ENCODE measurements at regions of chr9 and their contacts with region 1.

Region 1: GRCh38 chr9:137302176-137302994 is at the start of gene NRARP:
- DNase-seq: peak; percentile 74 to 95 (median 90)
- ATAC-seq: peak; percentile 94
- H3K4me3 ChIP-seq: peak within 1 kb of the TSS; percentile 39 to 50
- H3K4me3 Mint-ChIP-seq: peak within 1 kb of the TSS; percentile 60
- H3K27ac ChIP-seq: no peak within 1 kb of the TSS
- H3K27ac Mint-ChIP-seq: no peak within 1 kb of the TSS
- H3K4me1 ChIP-seq: peaks cover 48% of the 10 kb centered on the region
- H3K4me1 Mint-ChIP-seq: peaks cover 16% of the 10 kb centered on the region
- H3K27me3 ChIP-seq: peaks cover 20 to 21% of the 10 kb centered on the region in 2 experiments
- H3K27me3 Mint-ChIP-seq: peaks cover 14% of the 10 kb centered on the region
- CTCF ChIP-seq: peak; percentile 42
- total RNA-seq, gene NRARP: 1.00 to 1.5 TPM

Region 2: GRCh38 chr9:137269231-137269772 is 33.1 kb before region 1 on chr9:
- CTCF ChIA-PET with region 1: no interaction called
- POLR2A ChIA-PET with region 1: no interaction called
- intact Hi-C with region 1: no loop called
- DNase-seq: no peak
- ATAC-seq: no peak
- H3K4me3 ChIP-seq: no peak overlapping the region
- H3K4me3 Mint-ChIP-seq: no peak overlapping the region
- H3K27ac ChIP-seq: no peak overlapping the region
- H3K27ac Mint-ChIP-seq: no peak overlapping the region
- H3K4me1 ChIP-seq: peaks cover 21% of the 10 kb centered on the region
- H3K4me1 Mint-ChIP-seq: peaks cover 9% of the 10 kb centered on the region
- H3K27me3 ChIP-seq: no peaks in the 10 kb centered on the region
- H3K27me3 Mint-ChIP-seq: no peaks in the 10 kb centered on the region
- CTCF ChIP-seq: no peak

Region 3: DNA sequence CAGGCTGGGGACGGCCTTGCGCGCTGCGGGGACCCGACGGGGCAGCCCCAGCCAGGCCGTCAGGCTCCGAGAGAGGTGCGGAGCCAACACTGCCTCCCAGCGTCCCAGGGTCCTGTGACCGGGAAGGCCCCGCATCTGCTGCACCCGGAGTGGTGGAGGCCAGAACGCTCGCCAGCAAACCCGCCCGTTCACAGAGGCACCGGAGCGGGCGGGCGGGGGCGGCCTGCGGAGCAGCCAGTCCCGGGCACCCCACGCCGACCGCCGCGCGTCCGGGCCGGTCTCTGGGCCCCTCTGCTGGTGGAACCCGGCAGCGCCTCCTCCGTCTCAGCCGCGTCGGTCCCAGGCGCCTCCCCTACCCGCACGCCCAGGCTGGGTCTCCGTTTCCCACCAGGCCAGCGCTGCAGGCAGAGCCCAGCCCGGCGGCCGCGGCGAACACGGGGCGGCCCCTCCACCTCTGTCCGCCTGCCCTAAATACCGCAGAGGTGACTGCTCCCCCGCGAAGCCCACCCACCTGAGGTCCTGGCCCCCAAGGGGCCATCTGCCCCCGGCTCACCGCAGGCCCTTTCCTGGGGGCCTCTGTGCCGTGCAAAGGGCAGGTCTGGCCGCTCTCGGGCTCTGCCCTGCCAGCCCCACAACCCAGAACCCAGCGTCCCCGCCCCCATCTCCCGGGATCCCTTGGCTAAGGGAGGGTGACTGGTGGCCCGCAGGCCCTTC is 104.6 kb after region 1 on chr9:
- CTCF ChIA-PET with region 1: interaction called, 5 read pairs
- POLR2A ChIA-PET with region 1: interaction called, 3 read pairs
- intact Hi-C with region 1: loop called (anchors 2 kb)
- DNase-seq: peak; percentile 40 to 84 (median 60)
- ATAC-seq: peak; percentile 98
- H3K4me3 ChIP-seq: no peak overlapping the region
- H3K4me3 Mint-ChIP-seq: no peak overlapping the region
- H3K27ac ChIP-seq: no peak overlapping the region
- H3K27ac Mint-ChIP-seq: no peak overlapping the region
- H3K4me1 ChIP-seq: peaks cover 25% of the 10 kb centered on the region
- H3K4me1 Mint-ChIP-seq: peaks cover 4% of the 10 kb centered on the region
- H3K27me3 ChIP-seq: peaks cover 0 to 3% of the 10 kb centered on the region in 2 experiments
- H3K27me3 Mint-ChIP-seq: no peaks in the 10 kb centered on the region
- CTCF ChIP-seq: peak; percentile 66

Region 4: DNA sequence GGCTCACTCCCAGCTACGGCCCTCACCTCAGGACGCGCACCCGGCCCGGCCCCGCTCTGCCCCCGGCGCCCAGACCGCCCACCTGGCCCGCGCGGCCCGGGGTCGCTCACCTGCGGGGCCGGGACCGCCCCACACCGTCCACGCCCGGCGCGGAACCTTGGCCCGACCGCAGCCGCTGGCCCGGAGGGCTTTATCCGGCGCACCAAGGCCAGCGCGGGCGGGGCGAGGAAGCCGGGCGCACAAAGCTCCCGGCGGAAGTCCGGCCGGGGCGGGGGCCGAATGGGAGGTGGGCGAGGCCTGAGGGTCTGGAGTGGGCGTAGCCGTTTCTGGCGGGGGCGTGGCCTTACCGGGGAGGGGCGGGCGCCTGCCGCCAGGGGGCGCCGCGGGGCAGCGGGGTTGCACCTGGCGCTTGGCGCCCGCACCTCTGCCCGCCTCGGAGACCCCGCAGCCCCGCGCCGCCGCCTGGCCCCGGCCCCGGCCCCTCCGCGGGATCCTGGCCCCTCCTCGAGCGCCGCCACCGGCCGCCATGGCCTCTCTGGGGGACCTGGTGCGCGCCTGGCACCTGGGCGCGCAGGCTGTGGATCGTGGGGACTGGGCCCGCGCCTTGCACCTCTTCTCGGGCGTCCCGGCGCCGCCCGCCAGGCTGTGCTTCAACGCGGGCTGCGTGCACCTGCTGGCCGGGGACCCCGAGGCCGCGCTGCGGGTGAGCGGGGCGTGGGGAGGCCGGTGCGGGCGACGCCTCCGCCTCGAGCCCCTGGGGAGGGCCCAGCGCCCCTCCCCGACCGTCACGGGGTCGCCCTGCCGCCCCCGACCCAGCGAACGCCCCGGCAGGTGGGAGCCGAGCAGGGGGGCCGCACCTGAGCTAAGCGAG is 120.9 kb after region 1 on chr9 and contains the starts of genes EXD3 and NOXA1:
- CTCF ChIA-PET with region 1: interaction called, 3 read pairs
- POLR2A ChIA-PET with region 1: interaction called, 4 read pairs
- intact Hi-C with region 1: loop called in 1 of 2 experiments (anchors 5 kb)
- DNase-seq: peak; percentile 91 to 98 (median 94)
- ATAC-seq: peak; percentile 93
- H3K4me3 ChIP-seq: peak within 1 kb of the TSS; percentile 60 to 72
- H3K4me3 Mint-ChIP-seq: peak within 1 kb of the TSS; percentile 83
- H3K27ac ChIP-seq: peak within 1 kb of the TSS in 1 of 2 experiments; percentile 50
- H3K27ac Mint-ChIP-seq: no peak within 1 kb of the TSS
- H3K4me1 ChIP-seq: peaks cover 17% of the 10 kb centered on the region
- H3K4me1 Mint-ChIP-seq: peaks cover 20% of the 10 kb centered on the region
- H3K27me3 ChIP-seq: no peaks in the 10 kb centered on the region
- H3K27me3 Mint-ChIP-seq: no peaks in the 10 kb centered on the region
- CTCF ChIP-seq: peak; percentile 46
- total RNA-seq, gene EXD3: 9.1 to 11.0 TPM
- total RNA-seq, gene NOXA1: 2.4 to 2.7 TPM

Region 5: DNA sequence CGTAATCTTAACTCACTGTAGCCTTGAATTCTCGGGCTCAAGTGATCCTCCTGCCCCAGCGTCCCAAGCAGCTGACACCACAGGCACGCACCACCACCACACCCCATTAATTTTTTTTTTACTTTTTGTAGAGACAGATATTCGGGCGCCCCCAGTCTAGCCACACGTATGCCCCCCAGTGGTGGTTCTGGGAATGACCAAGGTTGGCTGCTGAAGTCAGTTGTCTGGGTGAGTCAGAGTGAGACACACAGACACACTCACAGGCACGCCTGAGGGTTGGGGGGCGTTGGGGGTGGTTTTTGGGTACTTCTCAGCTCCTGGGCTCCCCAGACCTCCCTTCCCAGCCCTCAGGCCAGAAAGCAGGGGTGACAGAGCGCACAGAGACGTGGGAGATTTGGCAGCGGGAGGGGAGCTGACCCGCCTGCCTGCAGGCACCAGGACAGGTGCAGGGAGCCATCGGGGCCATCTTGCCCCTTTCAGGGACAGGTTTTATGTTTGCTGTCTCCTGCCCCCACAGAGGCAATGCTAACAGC is 143.0 kb after region 1 on chr9:
- CTCF ChIA-PET with region 1: no interaction called
- POLR2A ChIA-PET with region 1: no interaction called
- intact Hi-C with region 1: loop called in 1 of 2 experiments (anchors 2 kb)
- DNase-seq: peak; percentile 70 to 90 (median 86)
- ATAC-seq: peak; percentile 85
- H3K4me3 ChIP-seq: no peak overlapping the region
- H3K4me3 Mint-ChIP-seq: no peak overlapping the region
- H3K27ac ChIP-seq: no peak overlapping the region
- H3K27ac Mint-ChIP-seq: no peak overlapping the region
- H3K4me1 ChIP-seq: peaks cover 17% of the 10 kb centered on the region
- H3K4me1 Mint-ChIP-seq: peaks cover 22% of the 10 kb centered on the region
- H3K27me3 ChIP-seq: peaks cover 6 to 13% of the 10 kb centered on the region in 2 experiments
- H3K27me3 Mint-ChIP-seq: peaks cover 16% of the 10 kb centered on the region
- CTCF ChIP-seq: peak; percentile 69

Region 6: DNA sequence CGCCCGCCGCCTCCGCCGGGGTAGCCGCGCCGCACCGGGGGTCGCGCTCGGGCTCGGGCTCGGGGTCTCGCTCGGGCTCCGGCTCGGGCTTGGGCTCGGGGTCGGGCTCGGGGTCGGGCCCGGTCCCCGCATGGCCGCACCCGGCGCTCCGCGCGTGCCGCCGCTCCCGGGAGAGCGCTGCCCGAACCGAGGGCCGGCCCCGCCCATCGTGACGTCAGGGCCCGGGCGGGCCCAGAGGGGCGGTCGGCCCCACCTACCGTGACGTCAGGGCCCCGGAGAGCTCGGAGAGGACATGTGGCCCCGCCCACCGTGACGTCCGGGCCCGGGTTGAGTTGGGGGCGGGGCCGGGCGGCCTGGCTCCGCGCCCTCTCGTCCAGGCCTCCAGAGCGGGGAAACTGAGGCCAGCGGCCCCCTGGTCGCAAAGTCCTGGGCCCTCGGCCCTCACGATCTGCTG is 156.8 kb after region 1 on chr9 and contains the start of gene NSMF:
- CTCF ChIA-PET with region 1: no interaction called
- POLR2A ChIA-PET with region 1: no interaction called
- intact Hi-C with region 1: loop called in 1 of 2 experiments (anchors 5 kb)
- DNase-seq: peak in 8 of 9 experiments; percentile 87 to 97 (median 92)
- ATAC-seq: peak; percentile 71
- H3K4me3 ChIP-seq: peak within 1 kb of the TSS; percentile 49 to 54
- H3K4me3 Mint-ChIP-seq: peak within 1 kb of the TSS; percentile 69
- H3K27ac ChIP-seq: peak within 1 kb of the TSS; percentile 71 to 80
- H3K27ac Mint-ChIP-seq: peak within 1 kb of the TSS; percentile 79
- H3K4me1 ChIP-seq: peaks cover 72% of the 10 kb centered on the region
- H3K4me1 Mint-ChIP-seq: peaks cover 44% of the 10 kb centered on the region
- H3K27me3 ChIP-seq: no peaks in the 10 kb centered on the region
- H3K27me3 Mint-ChIP-seq: no peaks in the 10 kb centered on the region
- CTCF ChIP-seq: no peak
- total RNA-seq, gene NSMF: 82.8 to 87.2 TPM

Region 7: GRCh38 chr9:137521405-137521985 is 219.1 kb after region 1 on chr9:
- CTCF ChIA-PET with region 1: no interaction called
- POLR2A ChIA-PET with region 1: no interaction called
- intact Hi-C with region 1: loop called (anchors 5 to 10 kb)
- DNase-seq: no peak
- ATAC-seq: no peak
- H3K4me3 ChIP-seq: no peak overlapping the region
- H3K4me3 Mint-ChIP-seq: no peak overlapping the region
- H3K27ac ChIP-seq: no peak overlapping the region
- H3K27ac Mint-ChIP-seq: no peak overlapping the region
- H3K4me1 ChIP-seq: no peaks in the 10 kb centered on the region
- H3K4me1 Mint-ChIP-seq: no peaks in the 10 kb centered on the region
- H3K27me3 ChIP-seq: no peaks in the 10 kb centered on the region
- H3K27me3 Mint-ChIP-seq: no peaks in the 10 kb centered on the region
- CTCF ChIP-seq: no peak

Measured in CD8-positive, alpha-beta T cell (primary cell).